Psoas muscle (tissue), 8 donors: ENCODE measurements at regions of chr10 and their contacts with region 1.

Region 1: DNA sequence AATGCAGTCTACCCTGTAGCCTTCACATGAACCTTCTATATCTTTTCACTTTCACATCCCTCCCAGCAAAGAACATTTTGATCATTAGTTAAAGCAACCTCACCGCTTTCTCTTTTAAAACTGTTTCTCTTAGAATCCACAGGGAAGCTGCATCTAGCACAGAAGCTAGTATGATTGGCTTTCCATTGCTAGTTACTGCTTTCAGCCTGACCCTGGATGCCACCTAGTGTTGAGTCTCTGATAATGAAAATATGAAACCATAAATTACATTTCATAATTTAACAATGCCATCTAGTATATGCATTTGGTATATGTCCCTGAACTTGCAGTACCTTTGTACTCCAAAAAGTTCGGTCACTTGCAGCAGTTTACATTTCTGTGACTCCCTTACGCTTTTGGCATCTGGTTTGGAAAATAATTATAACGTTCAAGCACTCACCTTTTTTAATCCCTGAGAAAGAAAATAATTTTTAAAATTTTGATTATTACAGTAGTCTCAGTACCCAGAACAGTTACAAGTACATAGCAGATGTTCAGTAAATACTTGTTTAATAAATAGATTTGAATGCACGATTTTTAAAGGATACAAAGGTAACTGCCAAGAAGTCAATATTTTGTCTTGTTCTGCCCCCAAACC is 22.7 kb downstream of the CISD1 start:
- DNase-seq: no peak
- ATAC-seq: peak in 3 of 4 donors; percentile 65 to 89 (median 78)
- H3K4me3 ChIP-seq: no peak overlapping the region
- H3K27ac ChIP-seq: no peak overlapping the region
- H3K4me1 ChIP-seq: no peaks in the 10 kb centered on the region
- H3K27me3 ChIP-seq: no peaks in the 10 kb centered on the region
- CTCF ChIP-seq: peak; percentile 79

Region 2: GRCh38 chr10:56844978-56845529 is 1446.6 kb before region 1 on chr10:
- intact Hi-C with region 1: no loop called
- DNase-seq: no peak
- ATAC-seq: no peak
- H3K4me3 ChIP-seq: no peak overlapping the region
- H3K27ac ChIP-seq: no peak overlapping the region
- H3K4me1 ChIP-seq: no peaks in the 10 kb centered on the region
- H3K27me3 ChIP-seq: no peaks in the 10 kb centered on the region
- CTCF ChIP-seq: no peak

Region 3: GRCh38 chr10:58177362-58177947 is 114.2 kb before region 1 on chr10:
- intact Hi-C with region 1: loop called (anchors 1 to 2 kb)
- DNase-seq: no peak
- ATAC-seq: peak in 2 of 4 donors; percentile 60 to 72
- H3K4me3 ChIP-seq: no peak overlapping the region
- H3K27ac ChIP-seq: no peak overlapping the region
- H3K4me1 ChIP-seq: no peaks in the 10 kb centered on the region
- H3K27me3 ChIP-seq: peaks cover 0 to 3% (median 0%) of the 10 kb centered on the region in 3 donors
- CTCF ChIP-seq: peak; percentile 75